GM13977 (cell line): ENCODE measurements at regions of chr3 and their contacts with region 1.

Region 1: GRCh38 chr3:160343132-160343531 is 55.9 kb downstream of the IFT80 start:
- DNase-seq: peak; percentile 8
- CTCF ChIP-seq: peak; percentile 41

Region 2: GRCh38 chr3:159884661-159885402 is 458.3 kb before region 1 on chr3:
- in situ Hi-C with region 1: loop called (anchors 25 kb)
- DNase-seq: peak; percentile 51
- CTCF ChIP-seq: peak; percentile 55

Region 3: GRCh38 chr3:160027541-160028195 is 315.5 kb before region 1 on chr3:
- in situ Hi-C with region 1: loop called (anchors 25 kb)
- DNase-seq: peak; percentile 48
- CTCF ChIP-seq: no peak

Region 4: GRCh38 chr3:160616716-160617115 is 273.6 kb after region 1 on chr3:
- in situ Hi-C with region 1: no loop called
- DNase-seq: no peak
- CTCF ChIP-seq: no peak